PC-3 (cell line): ENCODE measurements at regions of chr3 and their contacts with region 1.

Region 1: GRCh38 chr3:4633078-4634004 is 140.2 kb downstream of the ITPR1 start:
- DNase-seq: peak; percentile 77
- ATAC-seq: peak; percentile 82
- H3K4me3 ChIP-seq: no peak overlapping the region
- H3K27ac ChIP-seq: no peak overlapping the region
- H3K4me1 ChIP-seq: no peaks in the 10 kb centered on the region
- H3K27me3 ChIP-seq: no peaks in the 10 kb centered on the region
- CTCF ChIP-seq: peak; percentile 96

Region 2: GRCh38 chr3:4350789-4351163 is 282.6 kb before region 1 on chr3:
- CTCF ChIA-PET with region 1: interaction called, 16 read pairs
- POLR2A ChIA-PET with region 1: no interaction called
- intact Hi-C with region 1: loop called (anchors 1 kb)
- DNase-seq: peak; percentile 76
- ATAC-seq: peak; percentile 78
- H3K4me3 ChIP-seq: no peak overlapping the region
- H3K27ac ChIP-seq: no peak overlapping the region
- H3K4me1 ChIP-seq: peaks cover 10% of the 10 kb centered on the region
- H3K27me3 ChIP-seq: no peaks in the 10 kb centered on the region
- CTCF ChIP-seq: peak; percentile 93

Region 3: GRCh38 chr3:4466741-4467521 is 166.4 kb before region 1 on chr3 and contains the start of gene SUMF1:
- CTCF ChIA-PET with region 1: no interaction called
- POLR2A ChIA-PET with region 1: no interaction called
- intact Hi-C with region 1: loop called (anchors 1 kb)
- DNase-seq: peak; percentile 83
- ATAC-seq: peak; percentile 98
- H3K4me3 ChIP-seq: peak within 1 kb of the TSS; percentile 79
- H3K27ac ChIP-seq: peak within 1 kb of the TSS; percentile 63
- H3K4me1 ChIP-seq: no peaks in the 10 kb centered on the region
- H3K27me3 ChIP-seq: no peaks in the 10 kb centered on the region
- CTCF ChIP-seq: no peak
- total RNA-seq, gene SUMF1: 79.1 and 81.5 TPM in 2 replicates

Region 4: GRCh38 chr3:4517643-4518311 is 115.6 kb before region 1 on chr3:
- CTCF ChIA-PET with region 1: no interaction called
- POLR2A ChIA-PET with region 1: no interaction called
- intact Hi-C with region 1: loop called (anchors 5 kb)
- DNase-seq: no peak
- ATAC-seq: no peak
- H3K4me3 ChIP-seq: no peak overlapping the region
- H3K27ac ChIP-seq: no peak overlapping the region
- H3K4me1 ChIP-seq: peaks cover 18% of the 10 kb centered on the region
- H3K27me3 ChIP-seq: no peaks in the 10 kb centered on the region
- CTCF ChIP-seq: no peak

Region 5: DNA sequence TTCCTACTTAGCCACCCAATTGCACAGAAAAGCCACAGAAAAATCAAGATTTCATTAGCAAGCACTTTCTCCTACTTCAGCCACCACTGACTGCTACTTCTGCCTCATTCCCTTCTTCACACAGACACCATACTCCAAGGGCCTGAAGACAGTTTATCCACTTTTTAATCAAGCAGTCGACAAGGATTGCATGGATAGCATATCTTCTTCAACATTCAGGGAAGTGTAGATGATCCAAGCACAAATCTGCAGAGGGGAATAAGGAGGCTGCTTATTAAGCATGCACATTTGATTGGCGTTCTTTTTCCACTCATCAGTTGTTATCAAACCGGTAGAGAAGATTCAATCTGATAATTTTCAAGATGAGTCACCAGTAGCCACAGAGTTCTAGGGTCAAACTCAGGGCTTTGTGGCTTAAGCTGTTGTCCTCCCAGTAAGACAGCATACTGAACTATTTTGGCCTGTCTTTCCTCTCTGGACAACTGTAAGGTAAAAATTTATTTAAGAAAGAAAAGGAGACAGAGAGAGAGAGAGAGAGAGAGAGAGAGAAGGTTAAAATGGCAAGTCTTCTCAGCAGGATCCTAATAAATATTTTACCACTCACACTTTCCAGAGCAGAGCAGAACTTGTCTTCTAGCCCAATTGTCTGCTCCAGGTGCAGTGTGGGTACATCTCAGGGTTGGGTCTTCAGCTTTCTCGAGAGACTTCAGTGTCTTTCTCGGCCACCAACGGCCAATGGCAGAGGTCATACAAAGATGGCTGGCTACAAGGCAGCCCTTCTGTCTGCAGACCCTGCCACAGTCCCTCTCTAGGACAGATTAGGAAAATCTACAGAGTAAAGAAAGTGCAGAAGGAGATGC is 265.3 kb after region 1 on chr3:
- CTCF ChIA-PET with region 1: no interaction called
- POLR2A ChIA-PET with region 1: no interaction called
- intact Hi-C with region 1: no loop called
- DNase-seq: peak; percentile 55
- ATAC-seq: peak; percentile 25
- H3K4me3 ChIP-seq: no peak overlapping the region
- H3K27ac ChIP-seq: peak overlapping the region; percentile 8; the same call in 1 of the 2 replicates
- H3K4me1 ChIP-seq: peaks cover 24% of the 10 kb centered on the region; the same call in 1 of the 2 replicates
- H3K27me3 ChIP-seq: no peaks in the 10 kb centered on the region
- CTCF ChIP-seq: no peak